Naive thymus-derived CD8-positive, alpha-beta T cell (primary cell): ENCODE measurements at regions of chr12 and their contacts with region 1.

Region 1: DNA sequence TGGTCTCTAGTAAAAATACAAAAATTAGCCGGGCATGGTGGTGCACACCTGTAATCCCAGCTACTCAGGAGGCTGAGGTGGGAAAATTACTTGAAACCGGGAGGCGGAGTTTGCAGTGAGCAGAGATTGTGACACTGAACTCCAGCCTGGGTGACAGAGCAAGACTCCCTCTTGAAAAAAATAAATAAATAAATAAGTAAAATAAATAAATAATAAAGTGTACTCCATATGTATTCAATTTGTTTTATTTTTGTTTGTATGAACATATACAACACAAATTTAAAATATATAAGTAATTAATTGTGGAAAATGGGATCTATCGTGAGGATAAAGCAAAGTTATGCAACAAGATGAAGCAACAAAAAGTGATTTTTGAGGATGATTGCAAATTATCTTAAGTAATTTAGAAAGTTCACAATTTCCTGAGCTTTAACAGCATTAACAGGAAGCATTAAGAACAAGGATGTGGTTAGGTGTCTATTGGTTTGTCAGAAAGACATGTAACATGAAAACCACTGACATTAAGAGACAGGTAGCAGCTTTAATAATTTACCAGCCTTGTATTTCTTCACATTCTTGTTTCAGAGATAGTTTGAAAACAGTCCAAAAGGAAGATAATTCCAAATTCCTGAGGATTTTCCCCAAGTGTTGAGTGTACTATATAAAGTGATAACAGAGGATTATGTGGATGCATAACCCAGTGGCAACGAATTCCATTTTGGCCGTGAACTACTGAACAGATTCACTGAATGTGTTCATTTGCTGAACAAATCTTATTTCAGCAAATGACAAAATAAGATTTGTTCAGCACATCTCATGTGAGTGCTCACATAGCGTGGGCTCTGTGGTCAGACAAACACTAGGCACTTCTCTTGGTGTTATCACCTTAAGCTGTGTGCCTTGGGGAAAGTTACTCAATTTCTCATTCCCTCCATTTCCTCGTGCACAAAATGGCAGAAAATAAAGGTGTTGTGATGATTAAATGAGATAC is 68.6 kb upstream of the RESF1 start:
- DNase-seq: peak in 3 of 10 donors; percentile 64 to 76 (median 72)
- ATAC-seq: peak; percentile 77 to 98
- H3K4me3 Mint-ChIP-seq: peak overlapping the region in 9 of 10 donors; percentile 57 to 81 (median 72)
- H3K27ac Mint-ChIP-seq: peak overlapping the region; percentile 51 to 96 (median 91)
- H3K4me1 Mint-ChIP-seq: peaks cover 17 to 81% (median 58%) of the 10 kb centered on the region in 4 donors
- H3K27me3 Mint-ChIP-seq: no peaks in the 10 kb centered on the region

Region 2: GRCh38 chr12:31853977-31854376 is 36.6 kb before region 1 on chr12:
- POLR2A ChIA-PET with region 1: no interaction called
- DNase-seq: no peak
- ATAC-seq: no peak
- H3K4me3 Mint-ChIP-seq: no peak overlapping the region
- H3K27ac Mint-ChIP-seq: peak overlapping the region in 1 of 10 donors; percentile 26
- H3K4me1 Mint-ChIP-seq: peaks cover 4 to 11% (median 8%) of the 10 kb centered on the region in 4 donors
- H3K27me3 Mint-ChIP-seq: no peaks in the 10 kb centered on the region

Region 3: DNA sequence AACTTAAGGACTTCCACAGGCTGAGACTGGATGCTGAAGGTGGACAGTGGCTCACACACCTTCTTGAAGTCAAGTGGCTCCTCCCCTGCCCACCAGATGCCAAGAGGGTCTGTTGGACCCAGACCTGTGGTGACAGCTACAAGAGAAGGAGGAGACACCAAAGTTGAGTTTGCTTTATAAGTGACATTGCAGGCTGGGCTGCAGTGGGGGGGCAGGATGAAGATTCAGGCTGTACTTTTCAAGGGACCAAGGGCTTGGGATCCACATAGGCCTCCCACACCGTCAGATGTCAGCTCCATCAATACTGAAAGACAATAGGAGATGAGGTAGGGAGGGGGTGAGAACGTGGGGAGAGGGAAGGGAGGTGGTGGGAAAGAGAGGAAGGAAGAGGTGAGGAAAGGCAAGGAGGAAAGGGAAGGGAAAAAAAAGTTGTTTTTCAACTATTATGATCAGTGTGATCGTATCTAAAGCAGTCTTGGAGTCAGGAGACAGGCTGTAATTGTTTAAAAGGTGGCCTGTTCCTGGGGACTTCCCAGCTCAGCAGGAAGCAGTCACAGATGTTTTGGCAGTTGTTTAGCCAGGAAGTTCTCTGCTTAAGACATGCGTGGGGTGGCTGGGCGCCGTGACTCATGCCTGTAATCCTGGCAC is 15.5 kb before region 1 on chr12:
- POLR2A ChIA-PET with region 1: interaction called, 25 read pairs
- DNase-seq: peak; percentile 35 to 85 (median 70)
- ATAC-seq: peak; percentile 92 to 98
- H3K4me3 Mint-ChIP-seq: peak overlapping the region; percentile 62 to 85 (median 78)
- H3K27ac Mint-ChIP-seq: peak overlapping the region; percentile 96 to 99 (median 98)
- H3K4me1 Mint-ChIP-seq: peaks cover 22 to 71% (median 53%) of the 10 kb centered on the region in 4 donors
- H3K27me3 Mint-ChIP-seq: no peaks in the 10 kb centered on the region

Region 4: GRCh38 chr12:31966558-31967205 is 76.1 kb after region 1 on chr12:
- POLR2A ChIA-PET with region 1: interaction called, 112 read pairs
- DNase-seq: no peak
- ATAC-seq: peak; percentile 5 to 7
- H3K4me3 Mint-ChIP-seq: peak overlapping the region; percentile 93 to 99 (median 97)
- H3K27ac Mint-ChIP-seq: peak overlapping the region; percentile 94 to 99 (median 97)
- H3K4me1 Mint-ChIP-seq: peaks cover 47 to 99% (median 88%) of the 10 kb centered on the region in 4 donors
- H3K27me3 Mint-ChIP-seq: no peaks in the 10 kb centered on the region

Region 5: GRCh38 chr12:32016680-32017482 is 126.3 kb after region 1 on chr12:
- POLR2A ChIA-PET with region 1: no interaction called
- DNase-seq: no peak
- ATAC-seq: no peak
- H3K4me3 Mint-ChIP-seq: no peak overlapping the region
- H3K27ac Mint-ChIP-seq: no peak overlapping the region
- H3K4me1 Mint-ChIP-seq: peaks cover 10 to 23% (median 15%) of the 10 kb centered on the region in 4 donors
- H3K27me3 Mint-ChIP-seq: no peaks in the 10 kb centered on the region